ENCODE measurements at regions of chr10 and their contacts with region 1.

Region 1: GRCh38 chr10:67779465-67780203 is 58.4 kb downstream of the DNAJC12 start:
- DNase-seq: no peak
- H3K4me3 ChIP-seq: no peak overlapping the region
- H3K27ac ChIP-seq: no peak overlapping the region
- H3K4me1 ChIP-seq: peaks cover 4% of the 10 kb centered on the region
- H3K27me3 ChIP-seq: no peaks in the 10 kb centered on the region
- CTCF ChIP-seq: peak; percentile 85

Region 2: DNA sequence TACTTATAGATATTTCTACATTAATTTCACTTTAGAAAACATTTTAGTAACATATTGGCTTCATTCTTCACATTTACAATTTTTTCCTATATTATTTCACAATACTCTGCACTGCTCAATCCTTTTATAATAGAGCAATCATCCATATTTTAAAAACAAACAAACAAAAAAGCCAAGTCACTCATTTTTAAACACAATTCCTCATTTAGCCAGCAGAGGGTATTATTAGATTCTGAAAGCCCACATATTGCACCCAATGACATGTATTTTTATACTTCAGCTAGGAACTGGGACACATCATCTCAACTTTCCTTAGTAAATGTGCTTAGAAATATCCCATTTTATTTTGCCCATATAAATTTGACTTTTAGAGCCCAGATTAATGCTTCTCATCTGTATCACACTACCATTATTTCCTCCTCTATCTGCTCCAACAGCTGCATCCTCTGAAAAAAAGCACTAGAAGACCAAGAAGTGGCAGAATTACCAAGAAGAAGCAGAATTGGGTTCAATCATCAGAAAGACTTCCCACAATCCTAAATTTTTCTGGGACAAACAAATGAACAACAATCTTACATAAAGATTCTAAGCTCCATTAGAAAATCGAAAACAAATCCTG is 113.1 kb before region 1 on chr10:
- intact Hi-C with region 1: loop called (anchors 10 kb)
- DNase-seq: no peak
- H3K4me3 ChIP-seq: peak overlapping the region; percentile 57
- H3K27ac ChIP-seq: peak overlapping the region; percentile 78
- H3K4me1 ChIP-seq: peaks cover 86% of the 10 kb centered on the region
- H3K27me3 ChIP-seq: no peaks in the 10 kb centered on the region
- CTCF ChIP-seq: peak; percentile 63

Region 3: GRCh38 chr10:67697724-67698131 is 81.9 kb before region 1 on chr10:
- intact Hi-C with region 1: loop called (anchors 10 kb)
- DNase-seq: no peak
- H3K4me3 ChIP-seq: no peak overlapping the region
- H3K27ac ChIP-seq: peak overlapping the region; percentile 93
- H3K4me1 ChIP-seq: peaks cover 22% of the 10 kb centered on the region
- H3K27me3 ChIP-seq: no peaks in the 10 kb centered on the region
- CTCF ChIP-seq: peak; percentile 76